Calu3 (cell line): ENCODE measurements at regions of chr5 and their contacts with region 1.

Region 1: DNA sequence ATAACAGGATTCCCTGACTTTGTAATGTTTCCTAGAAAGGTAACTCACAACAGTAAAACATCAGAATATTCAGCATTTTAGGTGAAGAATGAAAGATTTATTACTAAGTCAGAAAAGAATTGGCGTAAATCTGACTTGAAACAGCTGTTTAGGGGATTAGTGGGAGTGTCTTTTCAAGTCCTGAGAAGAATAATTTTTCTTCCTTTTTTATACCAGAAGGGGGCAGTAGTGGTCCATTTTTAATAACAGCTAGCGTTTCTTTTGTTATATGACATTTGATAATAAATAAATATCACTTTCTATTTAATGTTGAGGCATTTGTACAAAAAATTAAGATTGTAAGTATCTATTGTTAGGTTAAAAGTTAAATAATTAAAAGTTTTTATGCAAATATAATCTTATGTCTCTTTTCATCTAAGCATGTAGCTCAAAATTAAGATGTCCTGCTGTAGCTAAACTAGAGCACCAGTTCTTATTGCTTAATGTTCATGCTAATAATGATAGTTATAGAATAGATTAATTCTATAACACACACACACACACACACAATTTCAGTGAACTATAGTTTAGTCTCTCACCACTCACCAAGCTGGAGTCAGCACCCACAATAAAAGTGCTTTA is 258.7 kb upstream of the ARRDC3 start:
- DNase-seq: no peak
- H3K4me3 Mint-ChIP-seq: no peak overlapping the region
- H3K27ac Mint-ChIP-seq: no peak overlapping the region
- H3K4me1 Mint-ChIP-seq: no peaks in the 10 kb centered on the region
- H3K27me3 Mint-ChIP-seq: no peaks in the 10 kb centered on the region
- CTCF ChIP-seq: peak; percentile 70

Region 2: GRCh38 chr5:91770400-91770799 is 128.6 kb after region 1 on chr5:
- CTCF ChIA-PET with region 1: no interaction called
- intact Hi-C with region 1: no loop called
- DNase-seq: no peak
- H3K4me3 Mint-ChIP-seq: no peak overlapping the region
- H3K27ac Mint-ChIP-seq: no peak overlapping the region
- H3K4me1 Mint-ChIP-seq: no peaks in the 10 kb centered on the region
- H3K27me3 Mint-ChIP-seq: no peaks in the 10 kb centered on the region
- CTCF ChIP-seq: no peak

Region 3: DNA sequence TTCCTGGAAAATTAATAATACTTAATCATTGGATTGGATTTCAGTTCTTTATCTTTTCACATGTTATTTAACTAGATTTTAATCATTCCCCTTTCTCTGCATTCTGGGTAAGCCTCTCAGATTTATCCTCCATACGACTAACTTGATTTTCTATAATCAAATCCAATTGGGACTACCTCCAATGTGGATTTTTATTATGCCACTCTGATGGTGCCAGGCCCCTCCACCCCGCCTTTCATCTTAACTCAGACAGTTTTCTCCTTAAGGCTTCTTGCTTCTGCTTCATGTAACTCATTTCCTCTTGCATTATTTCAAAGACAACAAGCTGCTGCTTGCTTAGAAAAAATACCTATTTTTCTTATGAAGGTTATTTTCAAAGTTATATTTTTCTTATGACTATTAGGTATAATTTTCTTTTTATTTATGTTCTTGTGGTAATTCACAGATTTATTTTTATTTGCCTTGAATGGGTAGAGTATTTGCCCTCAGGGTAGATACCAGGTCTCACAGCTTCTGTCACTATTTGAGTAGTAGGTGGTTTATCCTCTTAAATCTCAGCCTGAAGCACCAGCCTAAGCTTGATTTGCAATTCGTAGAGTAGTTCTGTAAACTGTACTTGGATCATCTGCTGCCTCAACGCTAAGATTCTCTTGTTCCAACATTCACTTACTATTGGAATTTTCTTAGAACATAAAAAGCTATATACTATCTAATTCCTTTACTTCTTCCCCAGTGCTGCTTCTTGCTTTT is 400.2 kb after region 1 on chr5:
- CTCF ChIA-PET with region 1: no interaction called
- intact Hi-C with region 1: loop called (anchors 5 kb)
- DNase-seq: no peak
- H3K4me3 Mint-ChIP-seq: no peak overlapping the region
- H3K27ac Mint-ChIP-seq: no peak overlapping the region
- H3K4me1 Mint-ChIP-seq: no peaks in the 10 kb centered on the region
- H3K27me3 Mint-ChIP-seq: no peaks in the 10 kb centered on the region
- CTCF ChIP-seq: no peak

Region 4: GRCh38 chr5:92222449-92222848 is 580.6 kb after region 1 on chr5:
- CTCF ChIA-PET with region 1: interaction called, 9 read pairs
- intact Hi-C with region 1: loop called (anchors 5 kb)
- DNase-seq: peak; percentile 11
- H3K4me3 Mint-ChIP-seq: no peak overlapping the region
- H3K27ac Mint-ChIP-seq: no peak overlapping the region
- H3K4me1 Mint-ChIP-seq: no peaks in the 10 kb centered on the region
- H3K27me3 Mint-ChIP-seq: no peaks in the 10 kb centered on the region
- CTCF ChIP-seq: no peak